ENCODE measurements at regions of chr18 and their contacts with region 1.

Region 1: GRCh38 chr18:12911025-12911928 is 27.2 kb upstream of the PTPN2 start:
- DNase-seq: no peak
- H3K4me3 ChIP-seq: peak overlapping the region; percentile 12
- CTCF ChIP-seq: no peak

Region 2: DNA sequence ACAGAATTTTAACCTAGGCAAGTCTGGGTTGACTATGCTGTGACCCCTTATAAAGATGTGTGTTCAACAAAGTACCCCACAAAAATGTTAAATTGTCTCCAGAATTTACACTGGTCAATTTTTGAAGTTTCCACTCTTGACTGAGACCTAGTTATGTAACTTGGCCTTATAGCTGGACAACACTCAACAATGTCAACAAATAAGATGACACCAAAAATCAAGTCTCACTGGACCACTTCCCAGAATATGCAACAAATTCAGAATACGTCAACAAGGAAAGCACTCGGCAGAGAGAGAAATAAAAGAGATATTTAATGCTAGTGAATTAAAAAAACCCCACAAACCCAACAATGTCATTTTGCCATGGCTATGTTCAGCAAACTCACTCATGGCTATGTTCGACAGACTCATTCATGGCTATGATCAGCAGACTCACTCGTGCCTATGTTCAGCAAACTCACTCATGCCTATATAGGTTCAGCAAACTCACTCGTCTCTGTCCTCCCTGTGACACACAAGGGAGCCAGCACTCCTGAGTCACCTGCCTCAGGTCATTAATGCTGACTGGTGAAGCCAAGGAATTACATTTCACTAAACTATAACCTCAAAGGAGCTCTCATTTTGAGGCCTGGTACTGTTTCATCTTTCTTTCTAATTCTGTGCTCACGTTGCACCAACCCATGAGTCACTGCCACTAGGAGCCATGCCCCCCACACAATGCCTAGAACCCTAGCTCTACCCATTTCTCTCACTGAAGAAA is 99.9 kb before region 1 on chr18:
- in situ Hi-C with region 1: no loop called
- DNase-seq: no peak
- H3K4me3 ChIP-seq: no peak overlapping the region
- CTCF ChIP-seq: no peak

Region 3: DNA sequence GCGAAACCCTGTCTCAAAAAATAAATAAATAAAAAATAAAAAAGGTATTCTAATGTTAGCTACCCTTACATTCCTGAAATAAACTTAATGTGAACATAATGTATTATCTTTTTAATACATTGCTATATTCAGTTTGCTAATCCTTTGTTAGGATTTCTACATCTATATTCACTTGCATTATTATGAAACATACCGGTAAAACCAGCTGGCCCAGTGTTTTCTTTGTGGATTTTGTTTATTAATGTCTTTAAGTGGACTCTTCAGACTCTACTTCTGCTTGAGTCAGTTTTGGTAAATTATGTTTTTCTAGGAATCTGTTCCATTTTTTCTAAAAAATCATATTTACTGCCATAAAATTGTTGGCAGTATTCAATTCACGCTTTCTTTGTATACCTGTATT is 61.7 kb before region 1 on chr18:
- in situ Hi-C with region 1: loop called (anchors 5 kb)
- DNase-seq: no peak
- H3K4me3 ChIP-seq: no peak overlapping the region
- CTCF ChIP-seq: no peak

Region 4: DNA sequence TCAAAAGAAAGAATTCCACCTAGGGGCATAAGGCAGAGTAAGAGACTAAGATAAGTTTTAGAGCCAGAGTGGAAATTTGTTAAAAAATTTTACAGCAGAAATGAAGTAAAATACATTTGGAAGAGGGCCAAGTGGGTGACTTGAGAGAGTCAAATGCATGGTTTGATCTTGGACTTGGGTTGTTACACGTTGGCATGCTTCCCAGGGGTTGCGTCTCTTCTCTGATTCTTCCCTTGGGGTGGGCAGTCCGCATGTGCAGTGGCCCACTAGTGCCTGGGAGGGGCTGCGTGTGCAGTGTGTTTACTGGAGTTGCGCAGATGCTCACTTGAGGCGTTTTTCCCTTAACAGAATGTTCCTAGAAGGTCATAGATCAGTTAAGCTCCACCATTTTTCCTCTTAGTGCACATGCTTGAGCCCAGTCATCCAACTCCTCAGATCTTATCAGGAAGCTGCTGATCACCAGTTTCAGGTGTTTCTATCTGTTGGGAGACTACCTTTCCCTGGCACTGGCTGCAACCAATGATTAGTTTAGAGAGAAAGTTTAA is 49.6 kb after region 1 on chr18:
- in situ Hi-C with region 1: no loop called
- DNase-seq: no peak
- H3K4me3 ChIP-seq: no peak overlapping the region
- CTCF ChIP-seq: no peak

Region 5: DNA sequence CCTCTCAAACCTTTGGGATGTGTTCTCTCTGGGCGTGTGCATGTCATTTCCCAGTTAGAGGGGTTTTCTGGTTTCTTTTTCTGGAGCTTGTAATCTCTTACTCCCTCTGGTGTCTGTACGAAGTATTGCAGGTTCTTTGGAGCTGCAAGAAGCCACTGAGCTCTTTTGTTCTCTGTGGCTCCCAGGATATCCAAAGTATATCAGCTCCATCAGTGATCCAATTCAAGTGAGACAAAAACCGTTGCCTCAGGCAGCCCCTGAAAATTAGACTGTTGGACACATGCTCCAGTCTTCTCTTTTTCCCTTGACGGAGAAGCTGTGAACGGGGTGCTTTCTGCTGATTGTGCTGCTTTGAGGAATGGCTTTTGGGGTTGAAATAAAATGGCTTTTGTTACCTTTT is 248.3 kb after region 1 on chr18:
- in situ Hi-C with region 1: no loop called
- DNase-seq: peak; percentile 62
- H3K4me3 ChIP-seq: no peak overlapping the region
- CTCF ChIP-seq: peak; percentile 80

Region 6: GRCh38 chr18:13416208-13416607 is 504.9 kb after region 1 on chr18:
- in situ Hi-C with region 1: no loop called
- DNase-seq: no peak
- H3K4me3 ChIP-seq: no peak overlapping the region
- CTCF ChIP-seq: no peak

Measured in astrocyte of the cerebellum (primary cell).